Activated CD4-positive, alpha-beta T cell treated with anti-CD3 and anti-CD28 coated beads, Interleukin-2, amount 10 ng/mL, durations not matched to agents 24 days and 14 days (primary cell): ENCODE measurements at regions of chr3 and their contacts with region 1.

Region 1: GRCh38 chr3:101827211-101828174 is 21.8 kb upstream of the NFKBIZ start:
- DNase-seq: peak; percentile 94
- H3K4me3 Mint-ChIP-seq: peak overlapping the region; percentile 86
- H3K27ac Mint-ChIP-seq: peak overlapping the region; percentile 97
- H3K4me1 Mint-ChIP-seq: peaks cover 52% of the 10 kb centered on the region
- H3K27me3 Mint-ChIP-seq: no peaks in the 10 kb centered on the region

Region 2: DNA sequence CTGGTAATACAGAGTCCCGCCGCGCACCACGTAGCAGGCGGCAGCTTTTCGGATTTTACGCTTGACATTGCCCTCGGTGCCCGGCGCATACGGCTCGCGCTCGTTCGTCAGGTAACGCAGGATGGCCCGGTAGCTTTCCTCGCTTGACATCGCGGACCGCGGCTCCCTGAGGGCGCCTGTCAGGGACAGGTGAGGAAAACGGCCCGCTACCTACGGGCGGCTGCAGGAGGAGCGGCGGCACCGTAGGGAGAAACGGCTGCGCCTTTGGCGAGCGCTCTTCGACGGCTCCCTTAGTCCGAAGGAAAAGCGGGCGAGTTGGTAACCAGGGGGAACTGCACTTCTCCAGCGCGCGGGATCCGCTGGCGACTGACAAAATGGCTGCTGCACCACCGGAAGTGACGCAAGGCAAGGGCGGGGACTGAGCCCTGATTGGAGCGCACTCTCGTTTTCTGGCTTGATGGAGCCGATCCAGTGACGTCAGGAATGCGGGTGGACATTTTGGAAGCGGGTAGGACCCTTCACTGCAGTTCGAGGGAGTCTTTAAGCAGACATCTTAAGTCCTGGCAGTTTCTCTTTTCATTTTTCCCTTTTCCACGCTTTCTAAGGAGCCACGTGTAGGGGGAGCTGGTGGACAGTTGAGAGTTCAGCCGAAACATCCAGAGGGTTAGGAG is 150.6 kb before region 1 on chr3 and contains the start of gene ZBTB11:
- intact Hi-C with region 1: loop called (anchors 5 kb)
- DNase-seq: peak; percentile 100
- H3K4me3 Mint-ChIP-seq: peak within 1 kb of the TSS; percentile 89
- H3K27ac Mint-ChIP-seq: peak within 1 kb of the TSS; percentile 97
- H3K4me1 Mint-ChIP-seq: peaks cover 36% of the 10 kb centered on the region
- H3K27me3 Mint-ChIP-seq: no peaks in the 10 kb centered on the region
- total RNA-seq, gene ZBTB11: 29.0 and 30.2 TPM in 2 replicates

Region 3: GRCh38 chr3:101809178-101810021 is 18.1 kb before region 1 on chr3:
- intact Hi-C with region 1: loop called (anchors 1 kb)
- DNase-seq: peak; percentile 80
- H3K4me3 Mint-ChIP-seq: no peak overlapping the region
- H3K27ac Mint-ChIP-seq: peak overlapping the region; percentile 36
- H3K4me1 Mint-ChIP-seq: peaks cover 37% of the 10 kb centered on the region
- H3K27me3 Mint-ChIP-seq: no peaks in the 10 kb centered on the region

Region 4: GRCh38 chr3:101925573-101925972 is 98.1 kb after region 1 on chr3:
- intact Hi-C with region 1: no loop called
- DNase-seq: no peak
- H3K4me3 Mint-ChIP-seq: peak overlapping the region; percentile 53
- H3K27ac Mint-ChIP-seq: peak overlapping the region; percentile 73
- H3K4me1 Mint-ChIP-seq: peaks cover 43% of the 10 kb centered on the region
- H3K27me3 Mint-ChIP-seq: peaks cover 5% of the 10 kb centered on the region

Region 5: DNA sequence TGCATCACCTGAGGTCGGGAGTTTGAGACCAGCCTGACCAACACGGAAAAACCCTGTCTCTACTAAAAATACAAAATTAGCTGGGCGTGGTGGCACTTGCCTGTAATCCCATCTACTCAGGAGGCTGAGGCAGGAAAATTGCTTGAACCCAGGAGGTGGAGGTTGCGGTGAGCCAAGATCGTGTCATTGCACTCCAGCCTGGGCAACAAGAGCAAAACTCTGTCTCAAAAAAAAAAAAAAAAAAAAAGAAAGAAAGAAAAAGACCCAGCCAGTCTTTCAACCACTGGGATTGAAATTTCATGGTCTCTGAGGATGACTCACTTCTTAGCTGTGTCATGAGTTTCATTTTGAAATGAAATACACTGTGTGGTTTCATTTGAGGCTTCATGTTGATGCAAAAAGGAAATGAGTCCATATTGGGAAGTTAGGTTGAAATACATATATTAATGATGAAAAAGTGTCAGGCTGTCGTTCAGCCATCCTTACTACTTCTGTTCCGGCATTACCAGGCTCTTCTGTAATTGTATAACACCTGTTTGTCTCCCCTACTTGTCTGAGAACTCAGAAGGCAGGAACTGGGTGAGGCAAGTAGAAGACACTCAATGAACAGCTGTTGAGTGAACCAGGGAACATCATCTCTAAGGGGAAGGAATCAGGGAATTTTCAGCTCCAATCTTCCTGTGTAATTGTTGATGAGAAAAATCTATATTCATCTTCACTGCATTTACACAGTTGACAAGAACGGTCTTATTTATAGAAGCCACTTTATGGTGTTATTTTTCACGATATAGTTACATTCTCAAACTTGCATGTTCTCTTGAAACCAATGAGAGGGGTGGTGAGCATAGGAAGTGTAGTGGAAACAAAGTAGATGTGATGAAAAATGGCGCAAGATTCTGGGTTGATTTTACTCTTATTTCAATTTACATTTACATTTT is 109.2 kb after region 1 on chr3:
- intact Hi-C with region 1: loop called (anchors 1 kb)
- DNase-seq: peak; percentile 79
- H3K4me3 Mint-ChIP-seq: peak overlapping the region; percentile 55
- H3K27ac Mint-ChIP-seq: peak overlapping the region; percentile 73
- H3K4me1 Mint-ChIP-seq: peaks cover 27% of the 10 kb centered on the region
- H3K27me3 Mint-ChIP-seq: peaks cover 15% of the 10 kb centered on the region

Region 6: GRCh38 chr3:102163036-102163827 is 335.7 kb after region 1 on chr3:
- intact Hi-C with region 1: loop called (anchors 5 kb)
- DNase-seq: no peak
- H3K4me3 Mint-ChIP-seq: no peak overlapping the region
- H3K27ac Mint-ChIP-seq: peak overlapping the region; percentile 0
- H3K4me1 Mint-ChIP-seq: peaks cover 14% of the 10 kb centered on the region
- H3K27me3 Mint-ChIP-seq: no peaks in the 10 kb centered on the region

Region 7: GRCh38 chr3:102290241-102290640 is 462.7 kb after region 1 on chr3:
- intact Hi-C with region 1: no loop called
- DNase-seq: no peak
- H3K4me3 Mint-ChIP-seq: no peak overlapping the region
- H3K27ac Mint-ChIP-seq: no peak overlapping the region
- H3K4me1 Mint-ChIP-seq: peaks cover 2% of the 10 kb centered on the region
- H3K27me3 Mint-ChIP-seq: peaks cover 7% of the 10 kb centered on the region